Activated CD4-positive, alpha-beta T cell treated with anti-CD3 and anti-CD28 coated beads, Interleukin-2, amount 10 ng/mL, durations not matched to agents 24 days and 14 days (primary cell): ENCODE measurements at regions of chr14 and their contacts with region 1.

Region 1: GRCh38 chr14:22265319-22266137 is 323.5 kb downstream of the DAD1 start:
- DNase-seq: no peak
- H3K4me3 Mint-ChIP-seq: no peak overlapping the region
- H3K27ac Mint-ChIP-seq: peak overlapping the region; percentile 51
- H3K4me1 Mint-ChIP-seq: no peaks in the 10 kb centered on the region
- H3K27me3 Mint-ChIP-seq: no peaks in the 10 kb centered on the region

Region 2: GRCh38 chr14:22226381-22226780 is 39.1 kb before region 1 on chr14:
- intact Hi-C with region 1: loop called (anchors 5 kb)
- DNase-seq: peak; percentile 72
- H3K4me3 Mint-ChIP-seq: peak overlapping the region; percentile 76
- H3K27ac Mint-ChIP-seq: peak overlapping the region; percentile 85
- H3K4me1 Mint-ChIP-seq: no peaks in the 10 kb centered on the region
- H3K27me3 Mint-ChIP-seq: no peaks in the 10 kb centered on the region